ENCODE measurements at regions of chr12 and their contacts with region 1.

Region 1: DNA sequence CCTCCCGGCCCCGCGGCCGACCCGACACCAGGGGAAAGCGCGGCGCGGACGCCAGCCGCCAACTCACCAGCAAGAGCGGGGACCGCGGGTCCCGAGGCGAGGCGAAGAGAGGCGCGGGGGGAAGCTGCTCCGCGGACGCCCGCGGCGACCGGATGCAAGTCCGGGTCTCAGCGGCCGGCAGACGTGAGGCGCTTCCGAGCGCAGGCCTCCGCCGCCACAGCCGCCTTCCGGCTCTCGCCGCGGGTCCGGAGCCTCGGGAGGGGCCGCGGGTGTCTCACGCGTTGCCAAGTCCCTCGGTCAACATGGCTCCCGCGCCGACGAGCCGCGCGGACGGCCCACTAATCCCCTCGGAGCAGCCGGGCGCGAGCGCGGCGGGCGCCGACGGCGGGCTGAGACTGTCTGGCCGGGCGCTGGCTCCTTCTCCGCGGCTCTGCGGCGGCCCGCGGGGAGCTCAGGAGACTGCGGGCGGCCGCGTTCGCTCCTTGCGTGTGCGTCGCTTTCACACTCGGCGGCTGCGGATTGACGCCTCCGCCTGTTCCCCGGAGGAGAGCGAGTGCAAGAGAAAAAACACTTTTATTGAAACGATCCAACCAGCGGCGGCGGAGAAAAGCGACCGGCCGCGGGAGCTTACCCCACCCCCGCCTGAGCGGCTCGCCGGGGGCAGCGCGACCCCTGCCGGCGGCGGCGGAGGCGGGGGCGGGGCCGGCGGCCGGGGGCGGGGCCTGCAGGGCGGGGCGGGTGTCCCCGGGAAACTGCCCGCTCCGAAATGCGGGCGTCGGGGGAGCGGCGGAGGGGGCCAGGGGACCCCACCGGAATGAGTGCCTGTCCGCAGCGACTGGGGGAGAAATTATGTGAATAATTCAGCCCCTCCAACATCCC is at the start of gene CDK17:
- DNase-seq: peak; percentile 79 to 97 (median 90)
- ATAC-seq: peak; percentile 68
- H3K4me3 ChIP-seq: peak within 1 kb of the TSS; percentile 75 to 84
- H3K4me3 Mint-ChIP-seq: peak within 1 kb of the TSS; percentile 93
- H3K27ac ChIP-seq: peak within 1 kb of the TSS; percentile 84 to 85
- H3K27ac Mint-ChIP-seq: peak within 1 kb of the TSS; percentile 98
- H3K4me1 ChIP-seq: peaks cover 30% of the 10 kb centered on the region
- H3K4me1 Mint-ChIP-seq: peaks cover 47% of the 10 kb centered on the region
- H3K27me3 ChIP-seq: no peaks in the 10 kb centered on the region
- H3K27me3 Mint-ChIP-seq: no peaks in the 10 kb centered on the region
- CTCF ChIP-seq: no peak
- total RNA-seq, gene CDK17: 150 to 160 TPM

Region 2: DNA sequence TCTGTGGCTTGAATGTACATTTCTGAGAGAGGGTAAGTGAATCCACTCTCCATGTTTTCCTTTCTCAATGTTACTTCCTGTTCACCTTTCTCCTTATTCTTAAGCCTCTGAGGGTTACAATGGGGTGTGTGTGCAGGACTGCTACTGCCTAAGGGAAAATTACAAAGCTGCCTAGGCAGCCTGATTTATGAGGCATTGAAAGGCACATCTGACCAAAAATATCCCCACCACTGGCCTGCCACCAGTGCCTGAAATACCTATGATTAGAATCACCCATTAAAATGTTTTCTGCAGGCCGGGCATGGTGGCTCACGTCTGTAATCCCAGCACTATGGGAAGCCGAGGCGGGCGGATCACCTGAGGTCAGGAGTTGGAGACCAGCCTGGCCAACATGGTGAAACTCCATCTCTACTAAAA is 750.8 kb before region 1 on chr12:
- CTCF ChIA-PET with region 1: no interaction called
- POLR2A ChIA-PET with region 1: no interaction called
- intact Hi-C with region 1: no loop called
- DNase-seq: no peak
- ATAC-seq: no peak
- H3K4me3 ChIP-seq: no peak overlapping the region
- H3K4me3 Mint-ChIP-seq: no peak overlapping the region
- H3K27ac ChIP-seq: no peak overlapping the region
- H3K27ac Mint-ChIP-seq: no peak overlapping the region
- H3K4me1 ChIP-seq: no peaks in the 10 kb centered on the region
- H3K4me1 Mint-ChIP-seq: no peaks in the 10 kb centered on the region
- H3K27me3 ChIP-seq: no peaks in the 10 kb centered on the region
- H3K27me3 Mint-ChIP-seq: peaks cover 4% of the 10 kb centered on the region
- CTCF ChIP-seq: no peak

Region 3: DNA sequence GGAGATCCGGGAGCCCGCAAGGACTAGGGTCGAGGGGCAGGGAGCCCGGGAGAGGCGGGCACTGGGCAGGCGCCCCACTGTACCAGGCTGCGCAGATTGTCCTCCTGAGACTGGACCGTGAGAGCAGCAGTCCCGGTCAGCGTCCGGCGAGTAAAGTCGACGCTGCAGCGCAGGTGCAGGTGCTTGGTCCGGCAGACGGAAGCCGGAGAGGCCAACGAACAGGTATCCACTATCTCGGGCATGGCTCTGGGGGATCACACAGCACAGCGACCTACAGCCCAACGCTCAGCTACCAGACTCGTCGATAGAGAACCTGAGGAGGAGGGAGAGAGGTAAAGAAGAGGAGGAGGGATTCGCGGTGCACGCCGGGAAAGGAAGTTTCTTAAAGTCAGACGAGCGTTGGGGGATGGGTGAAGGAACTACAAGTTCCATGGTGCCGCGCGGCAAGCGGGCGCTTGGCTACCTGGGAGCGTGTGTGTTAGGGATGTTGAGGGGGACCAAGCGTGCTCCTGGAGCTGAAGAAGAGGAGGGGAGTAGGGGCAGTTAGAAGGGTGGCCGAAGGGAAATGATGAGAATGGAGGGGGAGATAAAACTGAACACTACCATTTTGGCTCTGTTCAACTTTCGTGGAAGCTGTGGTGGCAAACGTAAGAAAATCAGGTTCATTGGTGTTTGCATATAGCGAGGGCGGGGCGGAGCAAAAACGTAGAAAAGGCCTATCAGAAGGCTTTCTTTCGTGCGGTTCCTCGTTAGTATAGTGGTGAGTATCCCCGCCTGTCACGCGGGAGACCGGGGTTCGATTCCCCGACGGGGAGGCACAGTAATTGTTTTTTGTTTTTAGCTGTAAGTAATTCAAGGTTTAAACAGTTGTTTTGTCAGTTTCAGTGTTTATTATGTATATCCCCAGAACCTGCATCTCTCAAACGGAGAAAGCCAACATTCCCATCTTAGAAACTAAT is 364.6 kb before region 1 on chr12 and contains the start of gene LTA4H:
- CTCF ChIA-PET with region 1: no interaction called
- POLR2A ChIA-PET with region 1: interaction called, 5 read pairs
- intact Hi-C with region 1: loop called (anchors 2 to 5 kb)
- DNase-seq: peak; percentile 90 to 99 (median 97)
- ATAC-seq: peak; percentile 92
- H3K4me3 ChIP-seq: peak within 1 kb of the TSS; percentile 65 to 92
- H3K4me3 Mint-ChIP-seq: no peak within 1 kb of the TSS
- H3K27ac ChIP-seq: peak within 1 kb of the TSS; percentile 68 to 78
- H3K27ac Mint-ChIP-seq: no peak within 1 kb of the TSS
- H3K4me1 ChIP-seq: peaks cover 14% of the 10 kb centered on the region
- H3K4me1 Mint-ChIP-seq: peaks cover 12% of the 10 kb centered on the region
- H3K27me3 ChIP-seq: no peaks in the 10 kb centered on the region
- H3K27me3 Mint-ChIP-seq: no peaks in the 10 kb centered on the region
- CTCF ChIP-seq: no peak
- total RNA-seq, gene LTA4H: 38.4 to 42.9 TPM

Region 4: DNA sequence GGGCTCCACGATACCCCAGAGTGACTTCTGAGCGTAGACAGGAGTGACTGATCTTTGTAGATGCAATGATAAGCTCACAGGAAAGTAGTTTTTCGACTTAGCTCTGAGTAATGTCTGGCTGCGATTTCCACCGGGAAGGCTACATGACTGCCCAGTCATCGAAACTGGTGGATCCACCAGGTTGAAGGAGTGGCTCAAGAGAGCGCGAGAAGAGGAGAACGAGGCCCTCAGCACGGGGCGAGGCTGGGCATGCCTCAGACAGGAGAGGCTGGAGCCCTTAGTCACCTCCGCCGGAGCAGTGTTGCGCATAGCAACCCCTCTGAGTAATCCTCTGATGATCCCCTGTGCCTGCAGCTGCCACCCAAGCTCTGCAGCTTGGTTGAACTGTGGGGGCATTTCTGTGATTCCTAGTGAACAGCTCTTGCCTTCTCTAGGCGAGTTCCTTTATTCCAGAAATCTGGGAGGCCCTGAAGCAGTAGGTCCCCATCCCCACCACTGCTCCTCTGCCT is 180.4 kb before region 1 on chr12:
- CTCF ChIA-PET with region 1: interaction called, 36 read pairs
- POLR2A ChIA-PET with region 1: interaction called, 7 read pairs
- intact Hi-C with region 1: loop called in 1 of 2 experiments (anchors 5 kb)
- DNase-seq: peak in 1 of 9 experiments; percentile 45
- ATAC-seq: no peak
- H3K4me3 ChIP-seq: no peak overlapping the region
- H3K4me3 Mint-ChIP-seq: no peak overlapping the region
- H3K27ac ChIP-seq: no peak overlapping the region
- H3K27ac Mint-ChIP-seq: no peak overlapping the region
- H3K4me1 ChIP-seq: peaks cover 10% of the 10 kb centered on the region
- H3K4me1 Mint-ChIP-seq: peaks cover 21% of the 10 kb centered on the region
- H3K27me3 ChIP-seq: no peaks in the 10 kb centered on the region
- H3K27me3 Mint-ChIP-seq: no peaks in the 10 kb centered on the region
- CTCF ChIP-seq: no peak

Region 5: GRCh38 chr12:96314723-96315122 is 85.4 kb before region 1 on chr12:
- CTCF ChIA-PET with region 1: no interaction called
- POLR2A ChIA-PET with region 1: interaction called, 18 read pairs
- intact Hi-C with region 1: no loop called
- DNase-seq: no peak
- ATAC-seq: peak; percentile 17
- H3K4me3 ChIP-seq: no peak overlapping the region
- H3K4me3 Mint-ChIP-seq: no peak overlapping the region
- H3K27ac ChIP-seq: peak overlapping the region in 1 of 2 experiments; percentile 30
- H3K27ac Mint-ChIP-seq: peak overlapping the region; percentile 60
- H3K4me1 ChIP-seq: peaks cover 13% of the 10 kb centered on the region
- H3K4me1 Mint-ChIP-seq: peaks cover 24% of the 10 kb centered on the region
- H3K27me3 ChIP-seq: no peaks in the 10 kb centered on the region
- H3K27me3 Mint-ChIP-seq: no peaks in the 10 kb centered on the region
- CTCF ChIP-seq: no peak

Region 6: GRCh38 chr12:96368233-96368632 is 31.9 kb before region 1 on chr12:
- CTCF ChIA-PET with region 1: interaction called, 6 read pairs
- POLR2A ChIA-PET with region 1: interaction called, 5 read pairs
- intact Hi-C with region 1: loop called (anchors 2 to 5 kb)
- DNase-seq: no peak
- ATAC-seq: no peak
- H3K4me3 ChIP-seq: no peak overlapping the region
- H3K4me3 Mint-ChIP-seq: peak overlapping the region; percentile 5
- H3K27ac ChIP-seq: no peak overlapping the region
- H3K27ac Mint-ChIP-seq: peak overlapping the region; percentile 13
- H3K4me1 ChIP-seq: peaks cover 53% of the 10 kb centered on the region
- H3K4me1 Mint-ChIP-seq: peaks cover 74% of the 10 kb centered on the region
- H3K27me3 ChIP-seq: no peaks in the 10 kb centered on the region
- H3K27me3 Mint-ChIP-seq: no peaks in the 10 kb centered on the region
- CTCF ChIP-seq: no peak

Region 7: DNA sequence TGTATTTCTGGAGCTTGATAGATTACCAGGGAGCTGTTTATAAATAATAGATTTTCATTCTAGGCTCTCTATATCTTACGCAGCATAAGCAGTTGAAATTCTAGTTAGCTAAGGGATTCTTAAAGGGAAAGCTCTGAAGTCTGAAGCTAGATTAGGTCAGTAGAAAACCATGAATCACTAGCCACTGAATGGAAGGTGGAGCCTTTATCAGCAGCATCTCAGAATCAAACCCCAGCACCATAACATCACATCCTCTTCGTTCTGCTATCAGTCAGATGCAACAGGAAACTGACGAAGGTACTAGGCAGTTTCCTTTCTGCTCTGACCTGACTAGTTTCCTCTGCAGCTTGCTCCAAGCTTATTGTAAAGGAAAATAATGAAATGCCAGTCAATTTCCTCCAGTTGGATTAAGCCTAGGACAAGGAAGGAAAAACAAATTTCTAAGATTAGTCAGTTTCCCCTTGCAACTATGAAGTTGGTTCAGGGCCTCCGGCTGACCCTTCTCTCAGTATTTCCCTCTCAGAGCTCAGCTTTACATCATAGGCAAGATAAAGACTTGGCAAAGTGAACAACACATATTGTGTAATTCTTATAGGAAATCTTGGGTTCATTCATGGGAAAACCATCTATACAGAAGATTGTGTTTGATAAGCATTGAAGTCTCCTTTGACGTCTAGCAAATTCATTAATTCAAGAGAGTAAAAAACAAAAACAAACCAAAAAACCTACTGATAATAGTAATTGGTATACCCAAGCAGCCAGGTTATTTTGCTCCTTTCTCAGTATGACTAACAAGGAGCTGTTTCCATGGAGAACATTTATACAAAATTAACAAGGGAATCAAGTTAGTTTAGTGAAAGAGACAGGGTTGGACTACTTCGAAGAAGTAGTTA is 45.8 kb after region 1 on chr12:
- CTCF ChIA-PET with region 1: interaction called, 20 read pairs
- POLR2A ChIA-PET with region 1: interaction called, 16 read pairs
- intact Hi-C with region 1: loop called (anchors 1 to 2 kb)
- DNase-seq: peak; percentile 24 to 95 (median 54)
- ATAC-seq: peak; percentile 92
- H3K4me3 ChIP-seq: peak overlapping the region in 1 of 2 experiments; percentile 20
- H3K4me3 Mint-ChIP-seq: peak overlapping the region; percentile 10
- H3K27ac ChIP-seq: peak overlapping the region; percentile 70 to 97
- H3K27ac Mint-ChIP-seq: peak overlapping the region; percentile 93
- H3K4me1 ChIP-seq: peaks cover 29% of the 10 kb centered on the region
- H3K4me1 Mint-ChIP-seq: peaks cover 40% of the 10 kb centered on the region
- H3K27me3 ChIP-seq: no peaks in the 10 kb centered on the region
- H3K27me3 Mint-ChIP-seq: no peaks in the 10 kb centered on the region
- CTCF ChIP-seq: no peak

Region 8: GRCh38 chr12:96906849-96907670 is 506.9 kb after region 1 on chr12 and contains the start of gene NEDD1:
- CTCF ChIA-PET with region 1: no interaction called
- POLR2A ChIA-PET with region 1: no interaction called
- intact Hi-C with region 1: loop called in 1 of 2 experiments (anchors 5 kb)
- DNase-seq: peak; percentile 65 to 90 (median 81)
- ATAC-seq: peak; percentile 72
- H3K4me3 ChIP-seq: peak within 1 kb of the TSS; percentile 99
- H3K4me3 Mint-ChIP-seq: peak within 1 kb of the TSS; percentile 91
- H3K27ac ChIP-seq: peak within 1 kb of the TSS; percentile 99 to 100
- H3K27ac Mint-ChIP-seq: peak within 1 kb of the TSS; percentile 99
- H3K4me1 ChIP-seq: peaks cover 21% of the 10 kb centered on the region
- H3K4me1 Mint-ChIP-seq: peaks cover 46% of the 10 kb centered on the region
- H3K27me3 ChIP-seq: no peaks in the 10 kb centered on the region
- H3K27me3 Mint-ChIP-seq: no peaks in the 10 kb centered on the region
- CTCF ChIP-seq: no peak
- total RNA-seq, gene NEDD1: 26.7 to 27.8 TPM